ENCODE measurements at regions of chr1 and their contacts with region 1.

Region 1: GRCh38 chr1:206544562-206545257 is 37.4 kb downstream of the RASSF5 start:
- DNase-seq: peak; percentile 76
- H3K4me3 ChIP-seq: no peak overlapping the region
- H3K27ac ChIP-seq: no peak overlapping the region
- H3K4me1 ChIP-seq: peaks cover 12% of the 10 kb centered on the region
- CTCF ChIP-seq: peak; percentile 95

Region 2: GRCh38 chr1:206489980-206490770 is 54.5 kb before region 1 on chr1:
- CTCF ChIA-PET with region 1: no interaction called
- POLR2A ChIA-PET with region 1: no interaction called
- intact Hi-C with region 1: loop called (anchors 1 kb)
- DNase-seq: peak; percentile 75
- H3K4me3 ChIP-seq: no peak overlapping the region
- H3K27ac ChIP-seq: no peak overlapping the region
- H3K4me1 ChIP-seq: peaks cover 5% of the 10 kb centered on the region
- CTCF ChIP-seq: peak; percentile 93

Region 3: GRCh38 chr1:206556750-206557635 is 12.3 kb after region 1 on chr1:
- CTCF ChIA-PET with region 1: interaction called, 10 read pairs
- POLR2A ChIA-PET with region 1: interaction called, 18 read pairs
- intact Hi-C with region 1: no loop called
- DNase-seq: peak; percentile 88
- H3K4me3 ChIP-seq: peak overlapping the region; percentile 92
- H3K27ac ChIP-seq: peak overlapping the region; percentile 72
- H3K4me1 ChIP-seq: peaks cover 57% of the 10 kb centered on the region
- CTCF ChIP-seq: peak; percentile 34; the same call in 1 of the 2 replicates

Region 4: DNA sequence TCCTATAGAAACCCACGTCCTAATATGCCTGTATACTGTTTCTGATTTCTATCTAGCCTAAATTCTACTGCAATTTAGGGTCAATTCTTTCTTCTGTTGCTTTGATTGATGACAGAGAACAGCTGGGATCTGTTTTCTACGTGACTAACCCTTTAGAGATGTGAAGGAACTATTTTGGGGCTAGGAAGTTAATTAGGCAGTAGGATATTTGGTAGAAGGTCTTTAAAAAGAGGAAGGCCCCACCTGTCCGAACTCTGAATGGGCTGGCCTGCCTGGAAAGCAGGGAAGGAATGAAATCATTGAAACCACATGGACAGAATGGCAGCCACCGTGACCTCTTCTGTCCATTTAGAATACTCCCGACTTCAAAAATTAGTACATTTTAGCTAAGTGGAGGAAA is 46.5 kb after region 1 on chr1:
- CTCF ChIA-PET with region 1: no interaction called
- POLR2A ChIA-PET with region 1: no interaction called
- intact Hi-C with region 1: no loop called
- DNase-seq: no peak
- H3K4me3 ChIP-seq: no peak overlapping the region
- H3K27ac ChIP-seq: no peak overlapping the region
- H3K4me1 ChIP-seq: no peaks in the 10 kb centered on the region
- CTCF ChIP-seq: no peak

Measured in OCI-LY7 (cell line).